ENCODE measurements at regions of chr4 and their contacts with region 1.

Region 1: GRCh38 chr4:10013722-10014121 is 7.6 kb downstream of the SLC2A9 start:
- DNase-seq: peak; percentile 67
- ATAC-seq: peak; percentile 59
- H3K4me3 Mint-ChIP-seq: no peak overlapping the region
- H3K27ac Mint-ChIP-seq: no peak overlapping the region
- H3K4me1 Mint-ChIP-seq: peaks cover 40% of the 10 kb centered on the region
- H3K27me3 Mint-ChIP-seq: no peaks in the 10 kb centered on the region

Region 2: DNA sequence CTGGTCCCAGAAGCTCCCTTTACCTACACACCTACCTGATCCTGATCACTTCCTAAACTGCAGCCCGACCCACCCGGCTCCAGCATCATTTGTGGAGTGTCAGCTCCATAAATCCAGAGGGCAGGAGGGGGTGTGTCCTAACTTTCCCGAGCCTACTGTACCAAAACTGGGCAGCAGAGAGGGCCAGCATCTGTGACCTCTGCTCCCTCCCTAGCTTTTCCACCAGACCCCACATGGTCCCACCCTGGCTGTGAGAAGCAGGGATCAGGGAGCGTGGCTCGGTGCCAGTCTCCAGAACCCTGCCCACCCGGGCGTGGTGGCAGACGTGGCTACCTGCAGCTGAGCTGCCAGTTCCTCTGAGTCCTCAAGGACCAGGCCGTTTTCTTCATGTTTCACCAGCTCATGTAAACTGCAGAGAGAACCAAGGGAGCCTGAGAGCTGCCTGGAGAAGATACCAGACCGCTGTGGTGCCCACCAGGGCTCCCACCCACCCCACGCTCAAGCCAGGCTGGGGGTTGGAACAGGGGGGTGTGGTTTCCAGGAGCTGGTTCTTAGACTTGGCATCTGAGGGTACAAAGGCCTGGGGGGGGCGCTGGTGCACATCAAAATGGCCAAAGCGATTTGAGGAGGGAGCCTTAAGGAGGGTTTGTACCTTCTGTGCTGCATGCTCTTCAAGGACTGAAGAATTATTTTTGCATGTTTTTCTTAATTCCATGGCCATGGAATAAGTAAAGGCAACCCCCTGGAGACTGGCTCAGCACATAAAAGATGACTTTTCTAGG is 309.0 kb before region 1 on chr4:
- CTCF ChIA-PET with region 1: interaction called, 57 read pairs
- POLR2A ChIA-PET with region 1: no interaction called
- DNase-seq: no peak
- ATAC-seq: no peak
- H3K4me3 Mint-ChIP-seq: no peak overlapping the region
- H3K27ac Mint-ChIP-seq: no peak overlapping the region
- H3K4me1 Mint-ChIP-seq: peaks cover 28% of the 10 kb centered on the region
- H3K27me3 Mint-ChIP-seq: no peaks in the 10 kb centered on the region

Region 3: GRCh38 chr4:9762823-9763475 is 250.8 kb before region 1 on chr4:
- CTCF ChIA-PET with region 1: interaction called, 86 read pairs
- POLR2A ChIA-PET with region 1: interaction called, 3 read pairs
- DNase-seq: peak; percentile 69
- ATAC-seq: peak; percentile 39
- H3K4me3 Mint-ChIP-seq: no peak overlapping the region
- H3K27ac Mint-ChIP-seq: no peak overlapping the region
- H3K4me1 Mint-ChIP-seq: no peaks in the 10 kb centered on the region
- H3K27me3 Mint-ChIP-seq: peaks cover 8% of the 10 kb centered on the region

Region 4: DNA sequence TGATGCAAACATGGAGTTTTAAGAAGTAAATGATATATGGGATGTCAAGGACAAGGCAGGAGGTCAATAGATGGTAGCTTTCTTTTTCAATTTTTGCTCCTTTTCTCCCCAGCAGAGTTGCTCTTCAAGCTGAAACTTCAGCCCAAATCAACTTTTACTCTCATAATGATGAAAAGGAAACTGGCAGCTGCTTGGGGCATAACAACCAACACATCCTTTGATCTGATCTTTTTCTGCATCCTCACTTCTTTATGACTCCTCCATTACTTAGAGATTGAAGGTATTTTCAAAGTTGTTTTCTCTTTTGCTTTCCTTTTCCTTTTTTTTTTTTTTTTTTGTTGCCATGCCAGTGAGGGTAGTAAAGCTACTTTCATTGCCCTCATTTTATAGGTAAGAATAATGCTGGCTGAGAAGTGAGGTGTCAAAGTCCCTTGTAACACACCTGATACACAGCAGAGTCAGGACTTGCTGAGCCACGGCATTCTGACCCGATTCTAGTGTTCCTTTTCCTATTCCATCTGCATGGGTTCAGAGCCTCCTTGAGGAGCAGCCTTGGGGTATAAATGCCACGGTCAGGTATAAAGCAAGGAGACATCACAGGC is 19.4 kb before region 1 on chr4:
- CTCF ChIA-PET with region 1: interaction called, 28 read pairs
- POLR2A ChIA-PET with region 1: no interaction called
- DNase-seq: no peak
- ATAC-seq: peak; percentile 62
- H3K4me3 Mint-ChIP-seq: no peak overlapping the region
- H3K27ac Mint-ChIP-seq: peak overlapping the region; percentile 69
- H3K4me1 Mint-ChIP-seq: peaks cover 46% of the 10 kb centered on the region
- H3K27me3 Mint-ChIP-seq: no peaks in the 10 kb centered on the region

Region 5: GRCh38 chr4:9999956-10000551 is 13.7 kb before region 1 on chr4:
- CTCF ChIA-PET with region 1: interaction called, 44 read pairs
- POLR2A ChIA-PET with region 1: no interaction called
- DNase-seq: no peak
- ATAC-seq: no peak
- H3K4me3 Mint-ChIP-seq: no peak overlapping the region
- H3K27ac Mint-ChIP-seq: no peak overlapping the region
- H3K4me1 Mint-ChIP-seq: peaks cover 76% of the 10 kb centered on the region
- H3K27me3 Mint-ChIP-seq: no peaks in the 10 kb centered on the region

Measured in activated CD8-positive, alpha-beta T cell treated with anti-CD3 and anti-CD28 coated beads, Interleukin-2, amount 10 ng/mL, durations not matched to agents 7 days and 5 days (primary cell).